CD4-positive, alpha-beta memory T cell (primary cell): ENCODE measurements at regions of chr6 and their contacts with region 1.

Region 1: GRCh38 chr6:131199568-131200272 is 64.5 kb downstream of the AKAP7 start:
- DNase-seq: peak; percentile 83 to 90 (median 87)
- H3K4me3 ChIP-seq: peak overlapping the region in 1 of 2 donors; percentile 54
- H3K4me3 Mint-ChIP-seq: peak overlapping the region; percentile 66 to 88 (median 82)
- H3K27ac ChIP-seq: peak overlapping the region; percentile 66
- H3K27ac Mint-ChIP-seq: peak overlapping the region; percentile 90 to 97 (median 95)
- H3K4me1 ChIP-seq: peaks cover 64% of the 10 kb centered on the region
- H3K4me1 Mint-ChIP-seq: peaks cover 43 to 62% (median 52%) of the 10 kb centered on the region in 4 donors
- H3K27me3 ChIP-seq: no peaks in the 10 kb centered on the region
- H3K27me3 Mint-ChIP-seq: no peaks in the 10 kb centered on the region

Region 2: DNA sequence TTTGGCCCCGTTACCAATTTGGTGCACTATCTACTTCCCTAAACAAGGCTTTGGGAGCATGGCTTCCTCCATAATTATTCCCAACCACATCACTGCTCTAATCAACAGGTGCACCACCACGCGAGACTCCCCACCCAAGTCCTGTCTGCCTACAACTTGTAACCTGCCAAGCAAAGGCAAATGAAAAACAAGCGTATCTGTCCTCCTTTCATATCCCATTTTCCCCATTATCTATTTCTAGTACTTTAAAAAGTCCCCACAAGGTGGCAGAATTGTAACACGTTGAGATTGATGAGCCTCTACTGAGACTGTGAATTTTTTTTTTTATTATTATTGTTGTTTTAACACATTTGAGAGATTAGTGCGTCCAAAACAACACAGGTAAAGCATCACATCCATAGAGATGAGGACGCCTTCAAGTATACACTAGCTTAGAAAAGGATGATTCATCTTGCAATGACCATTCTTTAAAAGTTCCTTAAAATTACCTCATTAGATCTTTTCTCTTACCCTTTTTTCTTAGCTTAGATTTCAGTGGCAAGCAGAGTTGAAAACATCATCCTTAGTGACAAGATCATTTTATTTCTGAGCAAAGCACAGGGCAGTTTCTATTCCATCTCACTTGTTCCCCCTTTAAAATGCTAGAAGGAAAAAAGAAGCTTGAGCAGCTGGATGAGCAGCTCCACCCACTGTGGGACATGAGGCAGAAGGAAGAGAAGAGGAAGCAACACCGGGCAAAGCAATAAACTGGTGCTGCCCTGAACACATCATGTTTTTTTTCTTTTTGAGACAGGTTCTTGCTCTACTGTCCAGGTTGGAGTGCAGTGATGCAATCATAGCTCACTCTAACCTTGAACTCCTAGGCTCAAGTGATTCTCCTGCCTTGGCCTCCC is 1700.5 kb before region 1 on chr6:
- CTCF ChIA-PET with region 1: no interaction called
- POLR2A ChIA-PET with region 1: no interaction called
- intact Hi-C with region 1: loop called (anchors 10 kb)
- DNase-seq: peak; percentile 29 to 62 (median 55)
- H3K4me3 ChIP-seq: no peak overlapping the region
- H3K4me3 Mint-ChIP-seq: peak overlapping the region; percentile 37 to 89 (median 76)
- H3K27ac ChIP-seq: no peak overlapping the region
- H3K27ac Mint-ChIP-seq: peak overlapping the region in 5 of 7 donors; percentile 1 to 50 (median 19)
- H3K4me1 ChIP-seq: peaks cover 21% of the 10 kb centered on the region
- H3K4me1 Mint-ChIP-seq: peaks cover 15 to 24% (median 19%) of the 10 kb centered on the region in 4 donors
- H3K27me3 ChIP-seq: no peaks in the 10 kb centered on the region
- H3K27me3 Mint-ChIP-seq: no peaks in the 10 kb centered on the region

Region 3: DNA sequence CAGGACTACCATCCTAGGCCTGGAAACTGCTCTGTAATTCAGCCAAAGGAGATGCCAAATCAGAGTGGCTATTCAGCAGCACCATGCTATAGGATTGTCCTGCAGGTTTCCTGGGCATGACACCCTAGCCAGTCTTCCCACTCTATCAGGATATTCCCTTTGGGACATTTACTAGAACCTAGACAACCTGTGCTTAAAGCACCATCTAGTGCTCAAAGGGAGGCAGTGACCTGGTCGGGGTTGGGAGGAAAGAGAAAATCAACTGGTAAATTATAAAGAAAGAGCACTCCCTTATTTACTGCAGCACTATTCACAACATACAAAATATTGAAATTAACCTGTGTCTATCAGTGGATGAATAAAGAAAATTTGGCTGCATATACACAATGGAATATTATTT is 439.7 kb before region 1 on chr6:
- CTCF ChIA-PET with region 1: no interaction called
- POLR2A ChIA-PET with region 1: no interaction called
- intact Hi-C with region 1: no loop called
- DNase-seq: no peak
- H3K4me3 ChIP-seq: no peak overlapping the region
- H3K4me3 Mint-ChIP-seq: no peak overlapping the region
- H3K27ac ChIP-seq: no peak overlapping the region
- H3K27ac Mint-ChIP-seq: no peak overlapping the region
- H3K4me1 ChIP-seq: peaks cover 10% of the 10 kb centered on the region
- H3K4me1 Mint-ChIP-seq: peaks cover 4 to 21% (median 11%) of the 10 kb centered on the region in 4 donors
- H3K27me3 ChIP-seq: no peaks in the 10 kb centered on the region
- H3K27me3 Mint-ChIP-seq: peaks cover 0 to 2% of the 10 kb centered on the region in 2 donors

Region 4: DNA sequence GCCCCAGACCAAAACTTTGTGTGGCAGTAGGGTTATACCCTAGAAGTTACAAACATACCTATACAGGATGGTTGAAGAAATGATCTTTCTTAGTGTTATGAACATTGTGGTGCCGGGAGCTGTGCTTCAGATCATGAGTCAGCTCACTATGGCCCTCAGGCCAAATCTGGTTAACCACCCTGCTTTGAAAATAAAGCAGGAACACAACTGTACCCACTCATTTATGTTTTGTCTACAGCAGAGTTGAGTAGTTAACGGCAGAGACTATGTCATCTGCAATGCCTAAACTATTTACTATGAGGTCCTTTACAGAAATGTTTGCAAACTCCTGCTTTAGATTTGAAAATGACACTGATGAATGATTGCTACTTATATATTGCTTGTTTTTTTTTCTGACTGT is 40.1 kb before region 1 on chr6:
- CTCF ChIA-PET with region 1: no interaction called
- POLR2A ChIA-PET with region 1: no interaction called
- intact Hi-C with region 1: no loop called
- DNase-seq: no peak
- H3K4me3 ChIP-seq: no peak overlapping the region
- H3K4me3 Mint-ChIP-seq: no peak overlapping the region
- H3K27ac ChIP-seq: no peak overlapping the region
- H3K27ac Mint-ChIP-seq: no peak overlapping the region
- H3K4me1 ChIP-seq: no peaks in the 10 kb centered on the region
- H3K4me1 Mint-ChIP-seq: no peaks in the 10 kb centered on the region
- H3K27me3 ChIP-seq: no peaks in the 10 kb centered on the region
- H3K27me3 Mint-ChIP-seq: no peaks in the 10 kb centered on the region

Region 5: DNA sequence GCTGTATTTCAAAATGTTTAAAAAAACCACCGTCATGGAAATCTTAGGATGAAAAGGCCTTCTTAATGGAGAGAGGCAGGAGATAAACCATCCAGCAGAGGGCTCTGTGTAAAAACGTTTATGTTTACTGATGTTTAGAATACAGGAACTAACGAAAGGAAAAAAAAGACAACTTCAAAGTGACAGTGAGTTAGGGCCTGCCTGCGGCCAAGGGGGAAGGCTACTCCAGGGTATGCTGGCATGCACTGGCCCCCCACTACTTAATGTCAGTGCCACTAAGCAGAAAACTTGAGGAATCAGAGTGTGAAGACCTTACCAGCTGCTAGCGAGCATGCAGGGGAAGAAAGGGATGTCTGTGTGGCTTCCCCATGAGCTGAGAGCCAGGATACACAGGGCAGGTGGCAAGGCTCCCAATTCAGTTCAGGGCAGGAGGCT is 16.7 kb before region 1 on chr6:
- CTCF ChIA-PET with region 1: interaction called, 93 read pairs
- POLR2A ChIA-PET with region 1: interaction called, 36 read pairs
- intact Hi-C with region 1: loop called (anchors 1 kb)
- DNase-seq: peak; percentile 43 to 57 (median 53)
- H3K4me3 ChIP-seq: peak overlapping the region in 1 of 2 donors; percentile 36
- H3K4me3 Mint-ChIP-seq: peak overlapping the region in 7 of 8 donors; percentile 52 to 90 (median 69)
- H3K27ac ChIP-seq: no peak overlapping the region
- H3K27ac Mint-ChIP-seq: peak overlapping the region; percentile 25 to 96 (median 88)
- H3K4me1 ChIP-seq: peaks cover 10% of the 10 kb centered on the region
- H3K4me1 Mint-ChIP-seq: peaks cover 6 to 18% (median 11%) of the 10 kb centered on the region in 4 donors
- H3K27me3 ChIP-seq: no peaks in the 10 kb centered on the region
- H3K27me3 Mint-ChIP-seq: no peaks in the 10 kb centered on the region

Region 6: GRCh38 chr6:131303338-131303954 is 103.7 kb after region 1 on chr6:
- CTCF ChIA-PET with region 1: no interaction called
- POLR2A ChIA-PET with region 1: interaction called, 5 read pairs
- intact Hi-C with region 1: loop called (anchors 1 kb)
- DNase-seq: no peak
- H3K4me3 ChIP-seq: no peak overlapping the region
- H3K4me3 Mint-ChIP-seq: no peak overlapping the region
- H3K27ac ChIP-seq: no peak overlapping the region
- H3K27ac Mint-ChIP-seq: peak overlapping the region in 3 of 7 donors; percentile 33 to 56 (median 38)
- H3K4me1 ChIP-seq: no peaks in the 10 kb centered on the region
- H3K4me1 Mint-ChIP-seq: peaks cover 6 to 12% (median 11%) of the 10 kb centered on the region in 4 donors
- H3K27me3 ChIP-seq: no peaks in the 10 kb centered on the region
- H3K27me3 Mint-ChIP-seq: no peaks in the 10 kb centered on the region

Region 7: GRCh38 chr6:131519670-131520436 is 320.1 kb after region 1 on chr6:
- CTCF ChIA-PET with region 1: interaction called, 27 read pairs
- POLR2A ChIA-PET with region 1: interaction called, 23 read pairs
- intact Hi-C with region 1: loop called (anchors 1 kb)
- DNase-seq: peak; percentile 45 to 51 (median 49)
- H3K4me3 ChIP-seq: no peak overlapping the region
- H3K4me3 Mint-ChIP-seq: peak overlapping the region in 1 of 8 donors; percentile 47
- H3K27ac ChIP-seq: no peak overlapping the region
- H3K27ac Mint-ChIP-seq: peak overlapping the region in 3 of 7 donors; percentile 8 to 44 (median 33)
- H3K4me1 ChIP-seq: peaks cover 10% of the 10 kb centered on the region
- H3K4me1 Mint-ChIP-seq: peaks cover 10 to 25% (median 18%) of the 10 kb centered on the region in 4 donors
- H3K27me3 ChIP-seq: no peaks in the 10 kb centered on the region
- H3K27me3 Mint-ChIP-seq: peaks cover 0 to 2% of the 10 kb centered on the region in 2 donors

Region 8: GRCh38 chr6:131627724-131628682 is 428.3 kb after region 1 on chr6 and contains the start of gene MED23:
- CTCF ChIA-PET with region 1: interaction called, 18 read pairs
- POLR2A ChIA-PET with region 1: interaction called, 17 read pairs
- intact Hi-C with region 1: loop called (anchors 1 kb)
- DNase-seq: peak; percentile 88 to 95 (median 91)
- H3K4me3 ChIP-seq: peak within 1 kb of the TSS; percentile 48 to 93
- H3K4me3 Mint-ChIP-seq: peak within 1 kb of the TSS; percentile 96 to 99 (median 98)
- H3K27ac ChIP-seq: peak within 1 kb of the TSS; percentile 70
- H3K27ac Mint-ChIP-seq: peak within 1 kb of the TSS; percentile 88 to 97 (median 93)
- H3K4me1 ChIP-seq: peaks cover 26% of the 10 kb centered on the region
- H3K4me1 Mint-ChIP-seq: peaks cover 19 to 37% (median 32%) of the 10 kb centered on the region in 4 donors
- H3K27me3 ChIP-seq: no peaks in the 10 kb centered on the region
- H3K27me3 Mint-ChIP-seq: no peaks in the 10 kb centered on the region
- total RNA-seq, gene MED23: 53.7 to 56.4 TPM